ENCODE measurements at regions of chr1 and their contacts with region 1.

Region 1: DNA sequence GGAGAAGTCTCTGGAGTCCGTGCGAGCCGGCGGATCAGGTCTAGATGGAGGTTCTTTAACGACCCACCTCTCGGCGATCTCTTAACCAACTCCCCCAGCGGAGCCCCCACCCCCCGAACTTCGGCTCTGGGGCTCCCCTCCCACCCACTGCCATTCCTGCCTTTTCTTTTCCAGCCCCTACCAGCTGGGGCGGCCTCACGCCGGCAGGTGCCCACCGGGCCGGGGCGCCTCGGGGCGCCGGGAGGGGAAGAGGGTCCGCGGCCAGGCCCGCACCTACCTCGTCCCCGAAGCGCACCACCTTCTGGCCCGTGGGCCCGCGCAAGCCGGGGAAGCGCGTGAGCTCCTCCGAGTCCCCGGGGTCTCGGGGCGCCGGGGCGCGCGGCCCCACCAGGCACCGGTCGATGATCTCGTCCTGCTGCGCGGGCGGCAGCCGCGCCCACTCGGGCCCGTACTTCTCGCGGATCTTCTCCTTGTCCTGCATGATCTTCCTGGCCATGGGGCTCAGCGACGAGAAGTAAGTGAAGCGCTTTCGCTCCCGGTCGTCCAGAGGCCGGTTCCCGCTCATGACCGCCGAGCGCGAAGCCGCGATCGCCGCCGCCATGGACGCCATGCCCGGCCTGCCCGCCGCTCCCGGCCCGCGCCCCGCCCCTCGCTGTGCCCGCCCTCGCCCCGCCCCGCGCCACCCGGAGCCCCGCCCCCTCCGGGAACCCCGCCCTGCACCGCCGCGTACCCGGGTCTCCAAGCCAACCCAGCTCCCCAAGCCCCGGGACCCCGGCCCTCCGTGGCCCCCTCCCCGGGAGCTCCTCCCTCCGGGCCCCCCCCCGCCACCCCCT is at the start of gene C1orf198:
- DNase-seq: peak; percentile 69 to 74
- H3K4me3 ChIP-seq: peak within 1 kb of the TSS; percentile 61 to 84 (median 84)
- H3K27ac ChIP-seq: peak within 1 kb of the TSS; percentile 66 to 94 (median 91)
- H3K4me1 ChIP-seq: peaks cover 45 to 50% of the 10 kb centered on the region in 2 donors
- H3K27me3 ChIP-seq: no peaks in the 10 kb centered on the region
- CTCF ChIP-seq: no peak
- POLR2A ChIP-seq: peak; percentile 38 to 69
- total RNA-seq, gene C1orf198: 87.8 to 142 (median 124) TPM

Region 2: DNA sequence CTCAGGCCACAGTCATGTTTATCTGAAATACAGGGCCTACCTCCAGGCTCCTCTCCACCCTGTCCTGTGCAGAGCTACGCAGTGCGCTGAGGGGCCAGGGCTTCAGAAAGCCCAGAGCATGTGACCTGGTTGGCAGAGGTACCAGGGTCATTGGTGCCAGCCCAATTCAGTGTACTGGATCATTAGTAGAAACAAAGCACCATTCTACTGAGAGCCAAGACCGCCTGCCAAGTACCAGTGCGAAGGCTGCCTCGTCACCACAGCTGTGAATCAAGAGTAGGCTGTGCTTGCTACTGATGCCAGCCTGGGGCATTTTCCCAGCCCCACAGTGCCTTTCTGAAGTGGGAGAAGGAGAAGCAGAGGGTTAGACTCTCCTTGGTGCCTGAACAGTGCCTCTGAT is 61.1 kb before region 1 on chr1:
- intact Hi-C with region 1: loop called (anchors 5 kb)
- DNase-seq: peak; percentile 72 to 85
- H3K4me3 ChIP-seq: no peak overlapping the region
- H3K27ac ChIP-seq: peak overlapping the region in 1 of 3 donors; percentile 0
- H3K4me1 ChIP-seq: no peaks in the 10 kb centered on the region
- H3K27me3 ChIP-seq: no peaks in the 10 kb centered on the region
- CTCF ChIP-seq: no peak
- POLR2A ChIP-seq: no peak

Measured in thyroid gland (tissue), 4 donors.